Activated CD4-positive, alpha-beta T cell treated with anti-CD3 and anti-CD28 coated beads, Interleukin-2, amount 10 ng/mL, durations not matched to agents 24 days and 14 days (primary cell): ENCODE measurements at regions of chr5 and their contacts with region 1.

Region 1: GRCh38 chr5:134304311-134304710 is 62.7 kb downstream of the CDKL3 start:
- DNase-seq: no peak
- H3K4me3 Mint-ChIP-seq: no peak overlapping the region
- H3K27ac Mint-ChIP-seq: no peak overlapping the region
- H3K4me1 Mint-ChIP-seq: no peaks in the 10 kb centered on the region
- H3K27me3 Mint-ChIP-seq: peaks cover 6% of the 10 kb centered on the region

Region 2: GRCh38 chr5:134365604-134366003 is 61.3 kb after region 1 on chr5:
- intact Hi-C with region 1: loop called (anchors 5 kb)
- DNase-seq: no peak
- H3K4me3 Mint-ChIP-seq: no peak overlapping the region
- H3K27ac Mint-ChIP-seq: no peak overlapping the region
- H3K4me1 Mint-ChIP-seq: peaks cover 23% of the 10 kb centered on the region
- H3K27me3 Mint-ChIP-seq: no peaks in the 10 kb centered on the region